CD4-positive, alpha-beta T cell (primary cell): ENCODE measurements at regions of chr4 and their contacts with region 1.

Region 1: GRCh38 chr4:98995183-98996055 is at the start of gene METAP1:
- DNase-seq: peak; percentile 92 to 99 (median 96)
- ATAC-seq: peak; percentile 85
- H3K4me3 ChIP-seq: peak within 1 kb of the TSS; percentile 90
- H3K4me3 Mint-ChIP-seq: peak within 1 kb of the TSS; percentile 93
- H3K27ac ChIP-seq: peak within 1 kb of the TSS; percentile 81 to 89
- H3K27ac Mint-ChIP-seq: peak within 1 kb of the TSS; percentile 99
- H3K4me1 ChIP-seq: peaks cover 23% of the 10 kb centered on the region
- H3K4me1 Mint-ChIP-seq: peaks cover 35% of the 10 kb centered on the region
- H3K27me3 ChIP-seq: no peaks in the 10 kb centered on the region
- H3K27me3 Mint-ChIP-seq: no peaks in the 10 kb centered on the region
- CTCF ChIP-seq: peak; percentile 73
- total RNA-seq, gene METAP1: 25.1 to 26.6 TPM

Region 2: DNA sequence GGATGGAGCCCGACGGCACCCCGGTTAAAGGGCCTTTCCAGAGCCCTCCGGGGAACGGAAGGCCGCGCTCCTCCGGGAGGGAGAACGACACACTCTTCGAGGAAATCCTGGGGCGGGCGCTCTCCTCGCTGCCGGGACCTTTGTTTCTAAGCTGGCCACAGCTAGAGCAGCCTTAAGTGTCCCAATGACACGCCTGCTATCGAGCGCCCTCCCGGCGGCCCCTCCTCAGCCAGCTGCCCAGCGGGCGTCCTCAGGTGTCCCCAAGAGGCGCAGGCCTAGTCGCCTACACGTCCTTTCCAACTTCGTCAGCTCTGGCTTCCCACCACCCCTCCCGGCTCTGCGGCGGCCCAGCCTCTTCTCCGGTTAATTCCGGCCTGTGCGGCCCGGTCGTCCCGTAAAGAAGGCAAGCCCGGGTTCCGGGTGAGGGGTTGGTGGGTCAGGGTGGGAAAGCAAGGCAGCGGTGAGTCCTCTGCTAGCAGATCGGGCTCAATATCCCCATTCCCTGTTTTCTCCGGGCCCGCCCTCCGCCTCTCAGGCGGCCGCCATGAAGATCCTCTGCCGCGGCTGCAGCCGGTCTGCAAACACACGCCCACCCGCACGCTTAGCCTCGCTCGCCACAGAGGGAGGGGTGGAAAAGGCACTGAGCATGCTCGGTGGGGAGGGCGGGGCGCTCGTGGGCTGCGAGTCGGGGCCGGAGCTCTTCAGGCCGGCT is 734.7 kb before region 1 on chr4:
- CTCF ChIA-PET with region 1: interaction called, 11 read pairs
- POLR2A ChIA-PET with region 1: interaction called, 26 read pairs
- intact Hi-C with region 1: loop called (anchors 5 to 10 kb)
- DNase-seq: peak in 13 of 14 experiments; percentile 76 to 96 (median 89)
- ATAC-seq: peak; percentile 68
- H3K4me3 ChIP-seq: peak overlapping the region; percentile 96
- H3K4me3 Mint-ChIP-seq: peak overlapping the region; percentile 95
- H3K27ac ChIP-seq: peak overlapping the region; percentile 81 to 82
- H3K27ac Mint-ChIP-seq: peak overlapping the region; percentile 88
- H3K4me1 ChIP-seq: peaks cover 19% of the 10 kb centered on the region
- H3K4me1 Mint-ChIP-seq: peaks cover 61% of the 10 kb centered on the region
- H3K27me3 ChIP-seq: no peaks in the 10 kb centered on the region
- H3K27me3 Mint-ChIP-seq: no peaks in the 10 kb centered on the region
- CTCF ChIP-seq: no peak

Region 3: DNA sequence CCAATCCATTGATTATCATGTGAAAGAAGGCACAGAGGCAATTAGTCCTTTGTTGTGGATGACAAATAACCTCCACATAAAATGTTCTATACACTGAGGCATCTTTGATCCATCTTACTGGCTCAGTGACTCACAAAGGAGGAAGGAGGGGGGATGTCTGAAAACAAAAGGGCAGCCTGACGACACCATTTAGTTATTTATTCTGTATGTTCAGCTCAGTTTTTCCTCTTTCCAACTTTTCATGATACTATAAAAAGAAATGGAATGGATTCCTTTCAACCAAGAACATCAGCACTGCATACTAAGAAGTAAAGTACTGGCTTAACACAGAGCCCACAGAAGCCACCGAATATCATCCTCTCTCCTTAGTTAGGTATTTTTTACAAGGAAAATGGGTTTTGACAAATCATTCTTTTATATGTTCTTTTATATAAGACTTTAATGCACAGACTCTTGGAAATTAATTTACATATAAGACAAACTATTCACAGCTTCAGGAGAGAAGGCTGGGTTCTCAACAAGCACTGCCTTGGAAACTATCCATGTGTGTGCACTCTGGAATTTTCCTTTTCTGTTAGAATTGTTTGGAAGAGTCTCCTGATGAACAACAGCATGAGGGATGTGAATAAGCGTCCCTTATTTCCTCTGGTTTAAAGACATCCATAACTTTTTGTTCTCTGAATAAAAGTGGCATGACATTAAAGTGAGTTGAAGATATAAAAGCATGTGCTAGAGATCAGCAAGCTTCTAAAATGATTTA is 472.6 kb before region 1 on chr4:
- CTCF ChIA-PET with region 1: no interaction called
- POLR2A ChIA-PET with region 1: no interaction called
- intact Hi-C with region 1: no loop called
- DNase-seq: no peak
- ATAC-seq: no peak
- H3K4me3 ChIP-seq: no peak overlapping the region
- H3K4me3 Mint-ChIP-seq: no peak overlapping the region
- H3K27ac ChIP-seq: no peak overlapping the region
- H3K27ac Mint-ChIP-seq: peak overlapping the region; percentile 54
- H3K4me1 ChIP-seq: peaks cover 10% of the 10 kb centered on the region
- H3K4me1 Mint-ChIP-seq: peaks cover 67% of the 10 kb centered on the region
- H3K27me3 ChIP-seq: no peaks in the 10 kb centered on the region
- H3K27me3 Mint-ChIP-seq: no peaks in the 10 kb centered on the region
- CTCF ChIP-seq: no peak

Region 4: DNA sequence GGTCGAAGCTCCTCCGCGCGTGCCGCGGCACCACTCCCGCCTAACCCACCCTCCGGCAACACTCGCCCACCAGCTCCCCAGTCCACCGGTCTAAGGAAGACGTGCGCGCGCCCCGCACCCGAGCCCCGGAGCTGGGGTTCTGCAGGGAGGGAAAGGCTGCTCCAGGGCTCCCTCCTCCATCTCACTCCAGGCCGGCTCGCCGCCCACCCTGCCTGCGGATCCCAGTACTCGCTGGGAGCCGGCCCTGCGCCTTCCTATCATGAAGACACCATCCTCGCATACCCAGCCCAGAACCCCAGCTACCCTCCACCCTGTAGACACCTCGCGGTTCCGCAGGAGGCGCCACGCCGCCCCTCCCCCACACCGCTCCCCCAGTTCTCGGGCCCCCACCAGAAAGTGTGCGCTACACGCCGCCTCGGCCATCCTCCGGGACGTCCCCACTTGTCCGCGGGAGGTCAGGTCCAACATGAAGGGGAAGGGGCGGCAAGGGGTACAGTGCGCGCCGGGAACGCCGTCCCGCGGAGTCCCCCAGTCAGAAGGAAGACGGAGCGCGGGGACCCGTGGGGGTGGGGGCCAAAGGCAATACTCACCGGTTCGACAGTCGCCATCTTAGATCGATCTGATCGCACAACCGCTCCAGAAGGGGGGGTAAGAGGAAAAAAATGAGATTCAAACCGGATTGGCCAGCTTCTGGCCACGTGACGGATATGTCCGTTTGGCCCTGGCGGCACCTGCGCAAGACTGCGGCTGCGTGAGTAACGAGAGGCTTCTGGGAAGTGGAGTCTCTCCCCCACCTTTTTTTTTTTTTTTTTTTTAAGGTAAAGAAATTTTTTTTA is 66.7 kb before region 1 on chr4 and contains the start of gene EIF4E:
- CTCF ChIA-PET with region 1: interaction called, 70 read pairs
- POLR2A ChIA-PET with region 1: interaction called, 72 read pairs
- intact Hi-C with region 1: loop called (anchors 1 to 2 kb)
- DNase-seq: peak; percentile 90 to 100 (median 95)
- ATAC-seq: peak; percentile 82
- H3K4me3 ChIP-seq: peak within 1 kb of the TSS; percentile 96
- H3K4me3 Mint-ChIP-seq: peak within 1 kb of the TSS; percentile 98
- H3K27ac ChIP-seq: peak within 1 kb of the TSS; percentile 85 to 94
- H3K27ac Mint-ChIP-seq: peak within 1 kb of the TSS; percentile 98
- H3K4me1 ChIP-seq: peaks cover 17% of the 10 kb centered on the region
- H3K4me1 Mint-ChIP-seq: peaks cover 46% of the 10 kb centered on the region
- H3K27me3 ChIP-seq: no peaks in the 10 kb centered on the region
- H3K27me3 Mint-ChIP-seq: no peaks in the 10 kb centered on the region
- CTCF ChIP-seq: peak; percentile 34
- total RNA-seq, gene EIF4E: 47.2 to 49.2 TPM

Region 5: DNA sequence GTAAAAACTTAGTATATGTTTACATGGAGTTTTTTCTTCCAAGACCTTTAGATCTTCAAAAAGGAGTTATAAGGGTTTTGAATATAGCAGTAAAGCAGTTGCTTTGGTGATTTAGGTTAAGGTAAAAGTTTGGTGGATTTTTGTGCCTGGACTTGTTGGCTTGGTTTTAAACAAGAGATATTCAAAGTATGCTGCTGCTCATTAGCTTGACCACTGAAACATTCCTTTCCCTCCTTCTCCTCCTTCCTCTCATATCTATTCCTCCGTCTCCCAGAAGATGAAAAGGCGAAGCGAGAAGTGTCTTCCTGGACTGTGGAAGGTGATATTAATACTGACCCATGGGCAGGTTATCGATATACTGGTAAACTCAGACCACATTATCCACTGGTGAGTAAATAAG is 38.5 kb after region 1 on chr4:
- CTCF ChIA-PET with region 1: interaction called, 11 read pairs
- POLR2A ChIA-PET with region 1: interaction called, 7 read pairs
- intact Hi-C with region 1: loop called in 1 of 2 experiments (anchors 5 kb)
- DNase-seq: no peak
- ATAC-seq: no peak
- H3K4me3 ChIP-seq: no peak overlapping the region
- H3K4me3 Mint-ChIP-seq: no peak overlapping the region
- H3K27ac ChIP-seq: no peak overlapping the region
- H3K27ac Mint-ChIP-seq: no peak overlapping the region
- H3K4me1 ChIP-seq: no peaks in the 10 kb centered on the region
- H3K4me1 Mint-ChIP-seq: peaks cover 33% of the 10 kb centered on the region
- H3K27me3 ChIP-seq: no peaks in the 10 kb centered on the region
- H3K27me3 Mint-ChIP-seq: no peaks in the 10 kb centered on the region
- CTCF ChIP-seq: no peak

Region 6: DNA sequence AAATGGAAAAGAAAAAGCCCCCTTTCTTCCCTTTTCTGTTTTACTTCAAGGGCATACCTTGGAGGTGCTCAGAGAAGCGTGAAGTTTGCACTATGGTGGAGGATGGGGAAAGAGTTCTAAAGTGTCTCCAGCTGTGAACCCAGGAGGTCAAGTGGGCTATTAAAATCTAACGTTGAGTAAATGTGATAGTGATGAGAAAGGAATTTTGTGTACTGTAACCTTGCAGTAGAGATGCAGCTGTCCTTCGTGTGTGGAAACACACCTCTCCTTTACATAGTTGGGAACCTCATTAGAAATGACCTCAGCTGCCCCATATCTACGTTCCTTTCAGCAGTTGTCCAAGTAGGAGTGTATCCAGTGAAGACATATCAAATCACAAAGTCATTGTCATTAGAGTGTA is 66.7 kb after region 1 on chr4:
- CTCF ChIA-PET with region 1: interaction called, 140 read pairs
- POLR2A ChIA-PET with region 1: interaction called, 82 read pairs
- intact Hi-C with region 1: no loop called
- DNase-seq: no peak
- ATAC-seq: no peak
- H3K4me3 ChIP-seq: no peak overlapping the region
- H3K4me3 Mint-ChIP-seq: no peak overlapping the region
- H3K27ac ChIP-seq: no peak overlapping the region
- H3K27ac Mint-ChIP-seq: no peak overlapping the region
- H3K4me1 ChIP-seq: no peaks in the 10 kb centered on the region
- H3K4me1 Mint-ChIP-seq: no peaks in the 10 kb centered on the region
- H3K27me3 ChIP-seq: no peaks in the 10 kb centered on the region
- H3K27me3 Mint-ChIP-seq: no peaks in the 10 kb centered on the region
- CTCF ChIP-seq: no peak

Region 7: DNA sequence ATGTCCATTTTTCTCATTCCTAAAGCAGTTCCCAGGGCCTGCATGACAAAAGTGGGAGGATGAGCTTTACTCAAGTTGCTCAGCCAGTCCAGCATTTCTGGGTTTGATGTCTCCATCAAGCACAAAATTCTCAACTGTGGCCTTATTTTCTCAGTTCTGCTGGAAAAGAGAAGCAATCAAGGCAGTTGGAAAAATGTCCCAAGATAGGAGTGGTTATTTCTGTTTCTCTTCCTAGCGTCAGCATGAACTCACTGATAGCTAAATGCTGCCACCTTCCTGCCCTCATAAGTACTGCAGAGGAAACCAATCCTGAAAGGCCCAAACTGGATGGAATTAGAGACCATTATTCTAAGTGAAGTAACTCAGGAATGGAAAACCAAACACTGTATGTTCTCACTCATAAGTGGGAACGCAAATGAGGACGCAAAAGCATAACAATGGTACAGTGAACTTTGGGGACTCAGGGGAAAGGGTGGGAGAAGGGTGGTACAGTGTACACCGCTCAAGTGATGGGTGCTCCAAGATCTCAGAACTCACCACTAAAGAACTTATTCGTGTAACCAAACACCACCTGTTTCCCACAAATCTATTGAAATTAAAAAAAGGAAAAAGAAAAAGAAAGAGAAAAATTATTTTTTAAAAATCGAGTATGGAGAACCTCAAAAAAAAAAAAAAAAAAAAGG is 410.2 kb after region 1 on chr4:
- CTCF ChIA-PET with region 1: interaction called, 3 read pairs
- POLR2A ChIA-PET with region 1: no interaction called
- intact Hi-C with region 1: loop called in 1 of 2 experiments (anchors 10 kb)
- DNase-seq: peak; percentile 15 to 75 (median 48)
- ATAC-seq: peak; percentile 79
- H3K4me3 ChIP-seq: no peak overlapping the region
- H3K4me3 Mint-ChIP-seq: no peak overlapping the region
- H3K27ac ChIP-seq: no peak overlapping the region
- H3K27ac Mint-ChIP-seq: no peak overlapping the region
- H3K4me1 ChIP-seq: no peaks in the 10 kb centered on the region
- H3K4me1 Mint-ChIP-seq: peaks cover 5% of the 10 kb centered on the region
- H3K27me3 ChIP-seq: no peaks in the 10 kb centered on the region
- H3K27me3 Mint-ChIP-seq: no peaks in the 10 kb centered on the region
- CTCF ChIP-seq: peak; percentile 86

Region 8: DNA sequence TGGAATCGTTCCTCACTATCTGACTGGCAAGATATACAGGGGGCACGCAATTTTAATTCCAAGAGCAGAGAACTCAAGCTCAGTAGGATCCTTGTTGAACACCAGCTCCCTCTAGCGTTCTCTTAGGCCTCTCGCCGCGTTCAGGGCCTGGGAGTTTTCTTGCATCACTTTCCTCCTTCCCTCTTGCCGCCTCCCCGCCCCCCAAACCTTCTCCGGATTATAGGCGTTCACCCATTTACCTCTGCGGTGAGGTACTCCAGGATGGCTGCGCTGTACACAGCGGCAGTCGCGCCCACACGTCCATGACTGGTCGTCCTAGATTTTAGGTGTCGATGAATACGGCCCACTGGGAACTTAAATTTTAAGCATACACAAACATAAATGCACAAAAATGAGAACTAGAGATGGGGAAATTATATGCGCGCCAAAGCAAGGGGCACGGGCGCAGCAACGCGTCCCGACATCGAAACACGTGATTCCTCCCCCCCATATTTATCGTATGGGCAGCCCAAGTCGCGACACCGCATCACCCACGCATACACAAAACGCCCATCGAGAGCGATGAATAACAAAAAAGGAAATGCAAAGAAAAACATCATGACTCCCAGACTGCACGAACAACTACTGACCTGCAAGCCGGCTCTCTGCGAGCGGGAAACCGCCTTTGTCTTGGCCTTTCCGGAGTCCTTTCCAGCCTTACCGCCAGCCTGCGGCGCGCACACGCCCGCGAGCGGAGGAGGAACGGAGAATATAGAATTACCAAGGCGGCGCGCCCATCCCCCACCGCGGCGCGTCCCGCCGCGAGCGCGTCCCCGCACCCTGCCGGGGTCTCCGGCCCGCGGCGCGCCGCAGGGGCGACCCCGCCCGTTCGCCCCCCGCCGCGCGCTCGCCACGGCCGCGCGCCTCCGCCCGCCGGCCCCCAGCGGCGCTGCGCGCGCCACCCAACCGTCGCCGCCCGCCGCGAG is 953.9 kb after region 1 on chr4:
- CTCF ChIA-PET with region 1: interaction called, 3 read pairs
- POLR2A ChIA-PET with region 1: interaction called, 6 read pairs
- intact Hi-C with region 1: loop called (anchors 2 to 5 kb)
- DNase-seq: peak; percentile 72 to 95 (median 82)
- ATAC-seq: peak; percentile 37
- H3K4me3 ChIP-seq: peak overlapping the region; percentile 93
- H3K4me3 Mint-ChIP-seq: no peak overlapping the region
- H3K27ac ChIP-seq: peak overlapping the region; percentile 84 to 90
- H3K27ac Mint-ChIP-seq: no peak overlapping the region
- H3K4me1 ChIP-seq: peaks cover 33% of the 10 kb centered on the region
- H3K4me1 Mint-ChIP-seq: peaks cover 31% of the 10 kb centered on the region
- H3K27me3 ChIP-seq: no peaks in the 10 kb centered on the region
- H3K27me3 Mint-ChIP-seq: no peaks in the 10 kb centered on the region
- CTCF ChIP-seq: peak; percentile 86

Region 9: GRCh38 chr4:100962698-100963097 is 1967.3 kb after region 1 on chr4:
- CTCF ChIA-PET with region 1: no interaction called
- POLR2A ChIA-PET with region 1: no interaction called
- intact Hi-C with region 1: no loop called
- DNase-seq: no peak
- ATAC-seq: no peak
- H3K4me3 ChIP-seq: no peak overlapping the region
- H3K4me3 Mint-ChIP-seq: no peak overlapping the region
- H3K27ac ChIP-seq: no peak overlapping the region
- H3K27ac Mint-ChIP-seq: no peak overlapping the region
- H3K4me1 ChIP-seq: no peaks in the 10 kb centered on the region
- H3K4me1 Mint-ChIP-seq: no peaks in the 10 kb centered on the region
- H3K27me3 ChIP-seq: no peaks in the 10 kb centered on the region
- H3K27me3 Mint-ChIP-seq: no peaks in the 10 kb centered on the region
- CTCF ChIP-seq: no peak